ENCODE measurements at regions of chr2 and their contacts with region 1.

Region 1: GRCh38 chr2:118763797-118764196 is 83.7 kb downstream of the EN1 start:
- DNase-seq: peak; percentile 20 to 55
- ATAC-seq: peak; percentile 98 to 100
- H3K4me3 ChIP-seq: peak overlapping the region; percentile 24 to 48 (median 34)
- H3K27ac ChIP-seq: peak overlapping the region; percentile 50 to 64 (median 63)
- H3K4me1 ChIP-seq: no peaks in the 10 kb centered on the region
- H3K27me3 ChIP-seq: no peaks in the 10 kb centered on the region
- CTCF ChIP-seq: peak; percentile 67 to 78 (median 70)
- POLR2A ChIP-seq: no peak

Region 2: DNA sequence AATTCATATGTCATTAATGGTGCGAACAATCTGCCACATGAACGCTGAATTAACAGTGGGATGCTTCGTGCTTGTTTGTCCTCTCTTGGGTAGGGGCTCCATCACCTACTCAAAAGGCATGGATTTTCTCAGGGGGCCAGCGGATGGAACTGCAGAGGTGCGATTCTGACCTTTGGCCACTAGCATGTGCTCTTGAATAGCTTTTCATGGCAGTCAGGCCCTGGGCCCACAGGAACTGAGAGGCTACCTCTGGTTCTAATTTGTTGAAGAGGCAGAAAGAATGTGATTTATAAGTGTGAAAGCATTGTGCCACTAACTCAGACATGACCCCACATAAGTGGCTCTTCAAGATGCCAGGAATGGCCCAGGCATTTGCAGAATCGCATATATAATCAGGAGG is 392.3 kb before region 1 on chr2:
- in situ Hi-C with region 1: no loop called
- intact Hi-C with region 1: loop called (anchors 5 kb)
- DNase-seq: no peak
- ATAC-seq: no peak
- H3K4me3 ChIP-seq: no peak overlapping the region
- H3K27ac ChIP-seq: no peak overlapping the region
- H3K4me1 ChIP-seq: no peaks in the 10 kb centered on the region
- H3K27me3 ChIP-seq: no peaks in the 10 kb centered on the region
- CTCF ChIP-seq: peak in 3 of 5 experiments; percentile 12 to 42 (median 21)
- POLR2A ChIP-seq: no peak

Region 3: GRCh38 chr2:118477111-118477862 is 286.5 kb before region 1 on chr2:
- in situ Hi-C with region 1: no loop called
- intact Hi-C with region 1: no loop called
- DNase-seq: no peak
- ATAC-seq: no peak
- H3K4me3 ChIP-seq: no peak overlapping the region
- H3K27ac ChIP-seq: no peak overlapping the region
- H3K4me1 ChIP-seq: no peaks in the 10 kb centered on the region
- H3K27me3 ChIP-seq: no peaks in the 10 kb centered on the region
- CTCF ChIP-seq: no peak
- POLR2A ChIP-seq: no peak

Region 4: DNA sequence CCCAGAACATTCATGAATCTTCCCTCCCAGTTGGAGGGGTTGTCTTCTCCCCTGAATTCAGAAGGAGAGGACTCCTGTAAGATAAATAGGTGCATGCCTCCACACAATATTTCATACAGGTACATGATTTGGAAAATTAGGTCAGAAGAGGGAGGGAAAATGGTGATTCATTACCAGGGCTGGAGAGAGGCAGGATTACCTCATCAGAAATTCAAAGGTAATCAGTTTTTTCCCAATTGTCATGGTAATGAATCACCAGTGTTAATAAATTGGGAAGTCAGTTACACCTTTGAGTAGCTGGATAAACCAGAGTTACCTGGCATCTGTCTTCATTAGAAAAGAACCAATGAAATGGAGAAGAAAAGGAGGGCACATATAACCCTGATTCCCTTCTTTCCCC is 44.9 kb before region 1 on chr2:
- in situ Hi-C with region 1: no loop called
- intact Hi-C with region 1: no loop called
- DNase-seq: no peak
- ATAC-seq: no peak
- H3K4me3 ChIP-seq: no peak overlapping the region
- H3K27ac ChIP-seq: no peak overlapping the region
- H3K4me1 ChIP-seq: no peaks in the 10 kb centered on the region
- H3K27me3 ChIP-seq: no peaks in the 10 kb centered on the region
- CTCF ChIP-seq: no peak
- POLR2A ChIP-seq: no peak

Region 5: DNA sequence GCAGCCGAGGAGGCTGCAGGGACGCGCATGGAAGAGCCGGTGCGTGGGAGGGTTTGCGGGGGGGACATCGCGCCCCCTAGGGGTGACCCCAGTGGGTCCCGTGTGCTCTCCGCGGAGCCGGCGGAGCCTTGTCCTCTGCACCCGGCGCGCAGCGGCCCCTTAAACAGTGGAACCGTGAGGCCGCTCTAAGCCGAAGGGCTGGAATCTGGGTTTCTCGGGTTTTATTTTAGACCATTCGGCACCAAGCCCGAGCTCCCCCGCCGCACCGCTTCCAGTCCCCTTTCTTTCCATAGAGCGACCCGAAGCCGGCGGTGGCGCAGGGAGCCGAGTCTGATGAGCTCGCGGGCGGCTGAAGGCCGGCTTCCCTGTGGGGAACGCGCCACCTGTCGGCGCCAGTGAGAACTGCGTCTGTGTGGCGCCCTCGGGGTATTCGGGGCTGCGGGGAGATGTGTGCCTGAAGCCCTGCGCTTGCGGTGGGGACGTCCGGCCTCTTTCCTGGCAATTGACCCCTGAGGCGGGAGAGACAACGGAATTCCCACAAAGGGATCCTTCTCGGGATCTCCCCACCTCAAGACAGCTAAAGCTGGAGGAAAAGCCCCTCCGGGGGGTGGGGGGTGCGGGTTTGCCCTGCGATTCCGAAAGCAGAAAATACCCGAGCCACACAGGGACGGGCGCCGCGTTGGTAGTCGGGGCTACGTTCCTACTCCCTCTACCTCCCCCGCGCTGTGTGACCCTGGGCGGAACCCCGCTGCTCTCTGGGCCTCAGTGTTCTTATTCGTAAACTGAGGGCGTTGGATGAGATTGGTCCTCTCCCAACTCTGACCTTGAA is 91.9 kb after region 1 on chr2:
- in situ Hi-C with region 1: loop called (anchors 5 to 10 kb)
- intact Hi-C with region 1: loop called (anchors 1 kb)
- DNase-seq: peak; percentile 65 to 79
- ATAC-seq: peak; percentile 63 to 65
- H3K4me3 ChIP-seq: peak overlapping the region; percentile 64 to 87 (median 73)
- H3K27ac ChIP-seq: peak overlapping the region; percentile 92 to 97 (median 96)
- H3K4me1 ChIP-seq: peaks cover 0 to 10% of the 10 kb centered on the region in 2 donors
- H3K27me3 ChIP-seq: peaks cover 0 to 14% (median 7%) of the 10 kb centered on the region in 3 donors
- CTCF ChIP-seq: peak; percentile 90 to 99 (median 98)
- POLR2A ChIP-seq: no peak

Measured in gastrocnemius medialis (tissue), 4 donors.